ENCODE measurements at regions of chr9 and their contacts with region 1.

Region 1: DNA sequence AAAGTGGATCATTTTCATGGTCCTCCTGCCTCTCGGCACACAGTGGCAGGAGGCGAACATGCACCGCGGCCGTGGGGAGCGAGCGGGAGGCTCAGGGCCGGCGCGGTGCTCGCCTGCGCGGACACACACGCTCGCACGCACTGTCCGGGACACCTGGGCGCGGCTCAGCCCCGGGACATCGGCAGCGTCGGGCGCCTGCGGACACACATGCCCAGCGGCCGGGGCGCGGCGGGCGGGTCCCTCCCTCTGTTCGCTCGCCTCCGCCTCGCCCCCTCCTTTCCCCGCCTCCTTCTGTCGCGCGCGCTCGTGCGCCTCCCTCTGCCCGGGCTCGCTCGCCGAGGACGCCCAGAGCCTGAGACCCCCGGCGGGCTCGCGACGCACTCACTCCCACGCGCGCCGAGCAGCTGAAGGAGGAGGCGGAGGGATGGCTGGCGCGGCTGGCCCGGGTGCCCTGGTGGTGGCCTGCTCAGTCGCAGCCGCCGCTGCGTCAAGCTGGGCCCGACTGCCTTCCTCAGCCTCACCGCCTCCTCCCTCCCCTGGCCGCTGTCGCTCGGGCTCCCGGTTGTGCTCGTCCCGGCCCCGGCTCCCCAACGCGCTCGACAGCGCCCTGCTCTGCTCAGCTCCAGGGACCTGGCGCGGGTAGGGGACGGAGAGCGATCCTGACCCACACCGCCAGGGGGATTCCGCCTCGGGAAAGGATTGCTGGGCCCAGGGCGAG is at the start of gene FRMD3:
- DNase-seq: peak; percentile 73
- ATAC-seq: peak; percentile 98
- H3K4me3 ChIP-seq: peak within 1 kb of the TSS; percentile 72 to 85 (median 77)
- H3K27ac ChIP-seq: peak within 1 kb of the TSS; percentile 57
- H3K4me1 ChIP-seq: peaks cover 38% of the 10 kb centered on the region
- H3K27me3 ChIP-seq: no peaks in the 10 kb centered on the region; a peak in 1 of 5 replicates
- CTCF ChIP-seq: peak; percentile 90
- EP300 ChIP-seq: no peak
- POLR2A ChIP-seq: no peak; a peak in 1 of 4 replicates
- RAD21 ChIP-seq: peak; percentile 91
- total RNA-seq, gene FRMD3: 7.7 and 9.6 TPM in 2 replicates

Region 2: DNA sequence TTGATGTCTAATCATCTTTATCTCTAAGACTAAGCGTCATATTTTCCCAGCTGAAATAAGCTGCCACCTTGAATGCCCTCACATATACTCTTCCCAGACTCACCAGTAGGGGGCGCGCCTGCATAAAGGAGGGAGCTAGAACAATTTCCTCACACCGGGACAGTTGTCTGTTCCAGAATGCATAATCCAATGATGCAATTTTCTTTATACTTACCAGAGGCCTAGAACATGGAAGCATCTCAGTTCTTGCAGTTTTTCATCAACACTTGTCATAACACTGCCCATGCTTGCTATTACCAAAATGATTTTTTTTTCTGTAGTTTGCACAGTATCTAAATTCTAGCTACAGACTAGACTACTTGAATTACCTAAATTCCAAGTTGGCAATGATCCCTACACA is 204.0 kb before region 1 on chr9:
- CTCF ChIA-PET with region 1: interaction called, 52 read pairs
- POLR2A ChIA-PET with region 1: no interaction called
- in situ Hi-C with region 1: loop called (anchors 5 kb)
- intact Hi-C with region 1: no loop called
- DNase-seq: peak; percentile 64
- ATAC-seq: peak; percentile 92
- H3K4me3 ChIP-seq: no peak overlapping the region
- H3K27ac ChIP-seq: no peak overlapping the region
- H3K4me1 ChIP-seq: no peaks in the 10 kb centered on the region
- H3K27me3 ChIP-seq: no peaks in the 10 kb centered on the region
- CTCF ChIP-seq: peak; percentile 91
- EP300 ChIP-seq: 0 out of 4 replicates have a peak, but pooled peaks of 1 of the 2 experiments have one; percentile 4
- POLR2A ChIP-seq: no peak
- RAD21 ChIP-seq: peak; percentile 93

Region 3: GRCh38 chr9:83384214-83384613 is 154.1 kb before region 1 on chr9:
- CTCF ChIA-PET with region 1: no interaction called
- POLR2A ChIA-PET with region 1: no interaction called
- in situ Hi-C with region 1: no loop called
- intact Hi-C with region 1: loop called (anchors 5 kb)
- DNase-seq: no peak
- ATAC-seq: no peak
- H3K4me3 ChIP-seq: no peak overlapping the region
- H3K27ac ChIP-seq: no peak overlapping the region
- H3K4me1 ChIP-seq: peaks cover 53% of the 10 kb centered on the region
- H3K27me3 ChIP-seq: no peaks in the 10 kb centered on the region
- CTCF ChIP-seq: no peak
- EP300 ChIP-seq: no peak
- POLR2A ChIP-seq: no peak
- RAD21 ChIP-seq: no peak

Region 4: DNA sequence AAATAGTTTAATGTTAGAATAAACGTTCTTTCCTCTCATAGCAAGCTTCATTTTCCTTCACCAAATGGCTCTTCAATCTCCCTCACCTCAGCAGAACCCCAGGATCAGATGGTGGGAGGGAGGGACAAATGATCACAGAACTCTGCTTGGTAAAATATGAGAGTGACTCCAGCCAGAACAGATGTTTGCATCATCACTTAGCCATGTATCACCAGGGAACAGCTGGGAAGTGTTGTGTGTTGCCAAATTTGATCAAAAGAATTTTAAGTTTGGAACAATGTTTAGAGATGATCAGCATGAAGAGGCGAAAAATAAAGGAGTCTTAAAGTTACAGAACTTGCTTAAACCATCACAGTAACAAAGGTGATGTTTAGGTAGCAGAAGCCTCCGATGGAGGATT is 115.8 kb before region 1 on chr9:
- CTCF ChIA-PET with region 1: no interaction called
- POLR2A ChIA-PET with region 1: no interaction called
- in situ Hi-C with region 1: no loop called
- intact Hi-C with region 1: loop called (anchors 5 kb)
- DNase-seq: no peak
- ATAC-seq: no peak
- H3K4me3 ChIP-seq: no peak overlapping the region
- H3K27ac ChIP-seq: peak overlapping the region; percentile 87
- H3K4me1 ChIP-seq: peaks cover 75% of the 10 kb centered on the region
- H3K27me3 ChIP-seq: no peaks in the 10 kb centered on the region
- CTCF ChIP-seq: no peak
- EP300 ChIP-seq: no peak
- POLR2A ChIP-seq: no peak
- RAD21 ChIP-seq: no peak

Region 5: DNA sequence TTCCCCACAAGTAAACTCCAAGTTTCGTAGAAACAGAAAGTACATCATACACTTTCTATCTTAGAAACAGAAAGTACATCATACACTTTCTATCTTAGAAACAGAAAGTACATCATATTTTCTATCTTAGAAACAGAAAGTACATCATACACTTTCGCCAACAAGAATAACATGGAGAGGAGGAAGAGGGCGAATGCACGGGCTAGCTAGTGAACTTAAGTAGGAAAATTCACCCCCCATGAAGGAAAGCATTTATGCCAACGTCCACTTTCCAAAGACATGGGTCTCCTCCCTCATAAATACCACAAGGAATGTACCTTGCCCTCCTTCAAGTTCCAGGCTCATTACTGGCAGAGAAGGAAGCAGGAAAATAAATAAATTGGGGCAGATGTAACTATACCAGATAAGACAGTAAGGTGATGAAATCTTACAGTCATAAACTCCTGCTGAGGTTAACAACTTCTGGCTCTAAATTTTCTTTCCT is 64.8 kb before region 1 on chr9:
- CTCF ChIA-PET with region 1: interaction called, 3 read pairs
- POLR2A ChIA-PET with region 1: no interaction called
- in situ Hi-C with region 1: no loop called
- intact Hi-C with region 1: loop called (anchors 2 kb)
- DNase-seq: no peak
- ATAC-seq: no peak
- H3K4me3 ChIP-seq: no peak overlapping the region
- H3K27ac ChIP-seq: peak overlapping the region; percentile 86
- H3K4me1 ChIP-seq: peaks cover 58% of the 10 kb centered on the region
- H3K27me3 ChIP-seq: no peaks in the 10 kb centered on the region
- CTCF ChIP-seq: no peak
- EP300 ChIP-seq: no peak
- POLR2A ChIP-seq: no peak
- RAD21 ChIP-seq: no peak

Region 6: DNA sequence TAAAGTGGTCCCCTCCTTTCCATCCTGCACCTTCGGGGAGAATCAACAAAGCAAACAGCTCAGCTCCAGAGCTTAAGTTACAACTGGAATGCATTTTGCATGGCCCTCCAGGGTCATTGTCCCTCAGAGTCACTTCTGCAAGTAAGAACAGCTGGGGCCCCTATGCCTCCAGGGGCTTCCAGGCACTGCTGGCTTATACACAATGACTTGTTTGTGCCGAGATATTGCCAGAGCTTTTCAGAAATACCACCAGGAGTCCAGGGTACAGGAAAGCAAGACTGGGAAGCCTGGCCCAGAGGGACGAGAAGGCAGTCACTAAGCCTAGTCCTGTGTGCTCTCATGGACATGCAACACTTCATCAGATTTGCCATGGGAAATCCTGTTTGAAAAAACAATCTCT is 11.4 kb before region 1 on chr9:
- CTCF ChIA-PET with region 1: interaction called, 4 read pairs
- POLR2A ChIA-PET with region 1: interaction called, 6 read pairs
- in situ Hi-C with region 1: no loop called
- intact Hi-C with region 1: loop called (anchors 1 kb)
- DNase-seq: peak; percentile 89
- ATAC-seq: peak; percentile 100
- H3K4me3 ChIP-seq: peak overlapping the region in 1 of 3 experiments; percentile 25; a peak in 1 of 6 replicates
- H3K27ac ChIP-seq: peak overlapping the region; percentile 66
- H3K4me1 ChIP-seq: peaks cover 43% of the 10 kb centered on the region
- H3K27me3 ChIP-seq: no peaks in the 10 kb centered on the region
- CTCF ChIP-seq: 0 out of 2 replicates have a peak, but pooled peaks have one; percentile 17
- EP300 ChIP-seq: peak in 1 of 2 experiments; percentile 67; a peak in 2 of 4 replicates
- POLR2A ChIP-seq: no peak
- RAD21 ChIP-seq: no peak